ENCODE measurements at regions of chr2 and their contacts with region 1.

Region 1: GRCh38 chr2:70062268-70062667 is 25.0 kb upstream of the PCBP1 start:
- DNase-seq: no peak
- H3K4me3 ChIP-seq: no peak overlapping the region
- H3K27ac ChIP-seq: no peak overlapping the region
- H3K4me1 ChIP-seq: no peaks in the 10 kb centered on the region
- H3K27me3 ChIP-seq: no peaks in the 10 kb centered on the region
- CTCF ChIP-seq: peak in 2 of 3 experiments; percentile 8 to 22; a peak in 2 of 4 replicates
- EP300 ChIP-seq: no peak
- POLR2A ChIP-seq: no peak
- RAD21 ChIP-seq: peak; percentile 23 to 47; a peak in 3 of 4 replicates

Region 2: GRCh38 chr2:69939722-69940121 is 122.5 kb before region 1 on chr2:
- CTCF ChIA-PET with region 1: interaction called, 12 read pairs
- POLR2A ChIA-PET with region 1: no interaction called
- DNase-seq: no peak
- H3K4me3 ChIP-seq: no peak overlapping the region
- H3K27ac ChIP-seq: no peak overlapping the region
- H3K4me1 ChIP-seq: peaks cover 0 to 3% (median 1%) of the 10 kb centered on the region in 4 experiments; a peak in 1 of 7 replicates
- H3K27me3 ChIP-seq: no peaks in the 10 kb centered on the region
- CTCF ChIP-seq: no peak
- EP300 ChIP-seq: no peak
- POLR2A ChIP-seq: no peak
- RAD21 ChIP-seq: no peak

Region 3: DNA sequence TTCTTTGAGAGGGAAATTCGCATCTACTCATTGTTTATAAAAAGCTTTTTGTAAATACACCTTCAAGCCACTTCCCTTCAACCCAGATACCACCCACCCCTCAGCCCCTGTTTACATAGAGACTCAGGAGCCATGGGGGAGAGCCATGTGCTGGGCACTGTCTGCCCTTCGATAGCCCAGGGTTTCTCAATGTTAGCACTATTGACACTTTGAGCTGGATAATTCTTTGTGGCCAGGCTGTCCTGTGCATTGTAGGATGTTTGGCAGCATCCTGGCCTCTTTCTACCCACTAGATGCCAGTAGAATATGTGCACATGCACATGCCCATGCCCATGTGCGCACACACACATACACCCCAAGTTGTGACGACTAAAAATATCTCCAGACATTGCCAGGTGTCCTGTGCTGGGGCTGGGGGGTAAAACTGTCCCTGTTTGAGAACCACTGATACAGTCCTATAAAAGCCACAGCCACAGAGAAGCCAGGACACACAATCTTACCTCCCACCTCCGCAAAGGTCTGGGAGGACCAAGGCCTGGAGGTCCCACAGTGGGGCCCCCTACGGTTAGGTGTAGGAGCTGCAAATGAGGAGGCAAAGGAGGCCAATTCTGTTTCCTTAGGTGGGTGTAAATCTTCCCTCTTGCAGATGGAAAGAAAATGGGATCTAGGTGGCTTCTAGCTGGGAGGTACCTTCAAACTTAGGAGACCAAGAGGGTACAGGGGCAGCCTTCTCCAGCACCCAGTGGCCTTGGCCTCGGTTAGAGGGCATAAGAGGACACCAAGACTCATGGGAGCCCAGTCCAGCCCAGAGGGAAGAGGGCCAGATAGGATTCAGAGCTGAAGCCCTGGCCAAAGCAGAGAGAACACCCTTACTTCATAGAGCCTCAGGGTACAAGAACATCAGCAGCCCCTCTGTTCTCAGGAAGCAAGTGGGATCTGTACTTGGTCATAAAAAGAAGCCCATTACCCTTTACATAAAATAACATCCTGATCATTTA is 56.2 kb before region 1 on chr2:
- CTCF ChIA-PET with region 1: interaction called, 22 read pairs
- POLR2A ChIA-PET with region 1: no interaction called
- DNase-seq: peak in 1 of 2 experiments; percentile 33
- H3K4me3 ChIP-seq: no peak overlapping the region
- H3K27ac ChIP-seq: no peak overlapping the region
- H3K4me1 ChIP-seq: peaks cover 4 to 14% (median 8%) of the 10 kb centered on the region in 4 experiments
- H3K27me3 ChIP-seq: no peaks in the 10 kb centered on the region
- CTCF ChIP-seq: peak; percentile 17 to 48 (median 29)
- EP300 ChIP-seq: no peak
- POLR2A ChIP-seq: no peak
- RAD21 ChIP-seq: peak; percentile 23 to 51; a peak in 2 of 4 replicates

Region 4: GRCh38 chr2:70043252-70043875 is 18.9 kb before region 1 on chr2:
- CTCF ChIA-PET with region 1: interaction called, 17 read pairs
- POLR2A ChIA-PET with region 1: interaction called, 8 read pairs
- DNase-seq: no peak
- H3K4me3 ChIP-seq: no peak overlapping the region
- H3K27ac ChIP-seq: no peak overlapping the region
- H3K4me1 ChIP-seq: no peaks in the 10 kb centered on the region
- H3K27me3 ChIP-seq: no peaks in the 10 kb centered on the region
- CTCF ChIP-seq: no peak
- EP300 ChIP-seq: no peak
- POLR2A ChIP-seq: no peak
- RAD21 ChIP-seq: no peak

Region 5: DNA sequence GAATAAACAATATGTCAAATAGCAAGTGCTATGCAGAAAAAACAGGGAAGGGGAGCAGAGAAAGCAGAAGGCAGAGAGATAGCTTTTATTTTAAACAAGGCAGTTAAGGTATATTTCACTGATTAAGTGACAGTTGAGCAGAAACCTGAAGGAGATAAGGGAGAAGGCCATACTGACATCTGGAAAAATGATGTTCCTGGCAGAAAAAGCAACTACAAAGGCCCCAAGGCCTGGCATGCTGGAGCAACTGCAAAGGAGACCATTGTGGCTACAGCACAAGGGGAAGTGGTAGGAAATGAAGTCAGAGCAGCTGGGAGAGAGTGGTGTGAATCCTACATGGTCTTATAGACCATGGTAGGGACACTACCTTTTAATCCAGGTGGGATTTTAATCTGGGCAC is 16.1 kb after region 1 on chr2:
- CTCF ChIA-PET with region 1: interaction called, 85 read pairs
- POLR2A ChIA-PET with region 1: interaction called, 184 read pairs
- DNase-seq: no peak
- H3K4me3 ChIP-seq: no peak overlapping the region
- H3K27ac ChIP-seq: no peak overlapping the region
- H3K4me1 ChIP-seq: no peaks in the 10 kb centered on the region
- H3K27me3 ChIP-seq: no peaks in the 10 kb centered on the region
- CTCF ChIP-seq: no peak
- EP300 ChIP-seq: no peak
- POLR2A ChIP-seq: no peak
- RAD21 ChIP-seq: no peak

Measured in H1 (cell line).